ENCODE measurements at regions of chr3 and their contacts with region 1.

Region 1: DNA sequence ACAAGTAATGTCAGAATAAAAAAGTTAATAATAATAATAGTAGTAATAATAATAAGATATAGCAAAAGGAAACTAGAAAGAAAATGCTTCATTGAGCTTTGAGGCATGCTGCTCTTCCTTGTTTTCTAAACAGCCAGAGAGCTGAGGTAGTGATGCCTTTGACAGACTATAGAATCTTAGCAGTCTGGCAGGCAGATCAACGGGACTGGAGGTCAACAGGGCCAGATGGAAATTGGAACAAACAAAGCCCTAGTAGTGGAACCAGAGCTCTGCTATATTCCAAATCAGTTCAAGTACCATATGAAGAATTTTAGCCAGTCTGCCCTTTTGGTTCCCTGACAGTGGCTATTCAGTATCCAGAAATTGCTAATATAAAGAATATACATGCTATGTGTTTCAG is 278.6 kb downstream of the NLGN1 start:
- DNase-seq: no peak
- H3K4me3 ChIP-seq: no peak overlapping the region
- H3K27ac ChIP-seq: no peak overlapping the region
- H3K4me1 ChIP-seq: no peaks in the 10 kb centered on the region
- H3K27me3 ChIP-seq: no peaks in the 10 kb centered on the region
- CTCF ChIP-seq: no peak
- POLR2A ChIP-seq: no peak

Region 2: DNA sequence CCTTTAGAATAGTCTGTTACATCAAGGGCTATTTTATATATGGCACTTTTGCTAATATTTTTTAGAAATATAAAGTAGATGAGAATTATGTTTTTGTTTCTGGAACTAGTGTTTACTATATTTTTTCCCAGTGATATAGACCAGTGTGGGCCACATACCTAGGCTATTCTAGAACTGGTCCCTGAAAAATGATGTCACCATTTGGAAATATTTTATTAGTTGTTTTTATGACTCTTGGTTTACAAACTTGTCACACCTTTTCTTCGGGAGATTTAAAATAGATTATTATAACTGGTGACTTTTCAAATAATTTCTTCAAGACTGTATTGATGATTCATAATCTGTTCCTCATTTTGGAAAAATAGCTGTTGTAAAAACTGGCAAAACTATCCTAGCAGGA is 49.6 kb before region 1 on chr3:
- intact Hi-C with region 1: loop called (anchors 2 kb)
- DNase-seq: no peak
- H3K4me3 ChIP-seq: no peak overlapping the region
- H3K27ac ChIP-seq: no peak overlapping the region
- H3K4me1 ChIP-seq: no peaks in the 10 kb centered on the region
- H3K27me3 ChIP-seq: no peaks in the 10 kb centered on the region
- CTCF ChIP-seq: no peak
- POLR2A ChIP-seq: no peak

Region 3: GRCh38 chr3:173639098-173639497 is 37.0 kb before region 1 on chr3:
- intact Hi-C with region 1: no loop called
- DNase-seq: no peak
- H3K4me3 ChIP-seq: no peak overlapping the region
- H3K27ac ChIP-seq: no peak overlapping the region
- H3K4me1 ChIP-seq: no peaks in the 10 kb centered on the region
- H3K27me3 ChIP-seq: no peaks in the 10 kb centered on the region
- CTCF ChIP-seq: no peak
- POLR2A ChIP-seq: no peak

Measured in spleen (tissue), 13 donors.